Tibial artery (tissue), 4 donors: ENCODE measurements at regions of chr13 and their contacts with region 1.

Region 1: DNA sequence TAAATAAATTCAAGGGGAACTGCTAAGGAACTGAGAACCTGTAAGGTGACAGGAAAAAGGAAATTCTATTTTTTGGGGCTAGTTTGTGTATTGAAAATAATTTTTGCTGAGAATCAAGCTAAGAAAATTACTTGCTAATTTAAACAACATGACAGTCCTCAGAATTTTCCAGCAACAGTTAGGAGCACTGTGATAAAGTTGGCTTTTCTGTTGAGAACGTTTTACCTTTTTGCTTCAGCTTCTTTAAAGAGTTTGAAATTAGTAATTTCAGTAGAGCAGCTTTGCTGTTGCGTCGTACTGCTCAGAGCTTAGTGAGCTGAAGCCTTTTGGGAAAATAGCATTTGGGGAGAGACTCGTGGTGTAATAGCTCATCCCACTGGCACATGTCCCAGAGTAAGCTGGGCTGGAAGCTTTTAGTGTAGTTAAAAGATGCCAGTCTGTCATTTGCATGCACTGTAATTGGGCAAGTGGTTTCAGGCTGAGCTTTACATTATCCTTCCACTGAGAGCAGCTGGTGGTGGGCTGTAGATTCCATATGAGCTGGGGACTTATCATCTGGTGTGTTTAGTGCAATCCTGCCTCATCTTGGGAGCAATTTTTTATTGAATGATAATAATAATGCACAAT is 69.8 kb downstream of the LRCH1 start:
- DNase-seq: peak; percentile 65 to 75
- H3K4me3 ChIP-seq: no peak overlapping the region
- H3K27ac ChIP-seq: peak overlapping the region in 1 of 2 donors; percentile 12
- H3K4me1 ChIP-seq: peaks cover 6 to 73% (median 48%) of the 10 kb centered on the region in 4 donors
- H3K27me3 ChIP-seq: no peaks in the 10 kb centered on the region
- CTCF ChIP-seq: no peak

Region 2: DNA sequence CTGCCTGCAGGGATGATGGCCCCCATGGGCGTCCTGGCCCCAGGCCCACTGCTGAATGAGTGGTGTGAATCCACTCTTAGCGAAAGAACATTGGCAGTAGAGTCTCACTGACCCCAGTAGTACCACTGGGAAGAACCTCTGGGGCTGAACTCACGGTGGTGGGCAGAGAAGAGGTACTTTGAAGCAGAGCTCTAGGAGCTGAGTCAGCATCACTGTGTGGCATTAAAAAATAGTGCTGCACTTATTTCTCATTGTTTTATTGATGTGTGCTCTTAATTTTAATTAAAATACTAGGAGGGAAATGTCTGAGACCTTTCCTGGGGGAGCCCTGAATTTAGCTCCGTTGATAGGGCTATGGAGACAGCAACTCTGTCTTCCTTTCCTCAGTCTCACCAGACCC is 859.3 kb before region 1 on chr13:
- intact Hi-C with region 1: loop called (anchors 5 kb)
- DNase-seq: no peak
- H3K4me3 ChIP-seq: no peak overlapping the region
- H3K27ac ChIP-seq: no peak overlapping the region
- H3K4me1 ChIP-seq: no peaks in the 10 kb centered on the region
- H3K27me3 ChIP-seq: no peaks in the 10 kb centered on the region
- CTCF ChIP-seq: no peak

Region 3: DNA sequence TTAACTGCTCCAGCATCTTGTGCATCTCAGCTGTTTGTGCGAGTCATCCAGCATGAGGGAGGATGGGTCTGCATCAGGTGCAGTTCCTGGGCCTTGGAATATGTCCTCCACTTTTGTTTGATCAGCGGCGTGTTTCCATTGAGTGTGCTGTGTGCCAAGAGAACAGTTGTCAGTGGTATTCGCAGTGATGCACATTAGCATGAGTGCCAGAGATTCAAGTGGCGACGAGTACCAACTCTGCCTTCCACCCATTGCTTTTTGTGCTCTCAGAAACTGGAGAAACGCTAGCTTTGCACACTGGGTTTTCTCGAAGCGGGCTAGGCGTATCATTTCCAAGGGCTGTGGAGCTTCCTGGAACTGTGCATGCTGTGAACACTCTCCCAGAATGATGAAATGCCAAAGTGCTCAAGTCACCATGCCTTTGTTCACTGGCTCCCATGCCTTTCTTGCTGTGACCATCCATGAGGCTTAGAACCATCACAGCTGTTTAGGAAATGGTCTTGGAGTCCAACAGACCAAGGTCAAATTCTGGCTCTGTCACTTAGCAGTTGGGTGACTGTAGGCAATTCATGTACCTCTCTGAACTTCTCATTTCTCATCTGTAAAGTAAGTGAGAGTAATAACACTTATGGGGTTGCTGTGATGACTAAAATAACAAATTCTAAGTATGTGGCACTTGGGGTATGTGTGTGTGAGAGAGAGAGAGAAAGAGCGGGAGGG is 51.4 kb before region 1 on chr13:
- intact Hi-C with region 1: no loop called
- DNase-seq: no peak
- H3K4me3 ChIP-seq: no peak overlapping the region
- H3K27ac ChIP-seq: peak overlapping the region; percentile 23 to 63
- H3K4me1 ChIP-seq: peaks cover 0 to 68% (median 19%) of the 10 kb centered on the region in 4 donors
- H3K27me3 ChIP-seq: no peaks in the 10 kb centered on the region
- CTCF ChIP-seq: no peak